Ovary (tissue), 10 donors: ENCODE measurements at regions of chr4 and their contacts with region 1.

Region 1: DNA sequence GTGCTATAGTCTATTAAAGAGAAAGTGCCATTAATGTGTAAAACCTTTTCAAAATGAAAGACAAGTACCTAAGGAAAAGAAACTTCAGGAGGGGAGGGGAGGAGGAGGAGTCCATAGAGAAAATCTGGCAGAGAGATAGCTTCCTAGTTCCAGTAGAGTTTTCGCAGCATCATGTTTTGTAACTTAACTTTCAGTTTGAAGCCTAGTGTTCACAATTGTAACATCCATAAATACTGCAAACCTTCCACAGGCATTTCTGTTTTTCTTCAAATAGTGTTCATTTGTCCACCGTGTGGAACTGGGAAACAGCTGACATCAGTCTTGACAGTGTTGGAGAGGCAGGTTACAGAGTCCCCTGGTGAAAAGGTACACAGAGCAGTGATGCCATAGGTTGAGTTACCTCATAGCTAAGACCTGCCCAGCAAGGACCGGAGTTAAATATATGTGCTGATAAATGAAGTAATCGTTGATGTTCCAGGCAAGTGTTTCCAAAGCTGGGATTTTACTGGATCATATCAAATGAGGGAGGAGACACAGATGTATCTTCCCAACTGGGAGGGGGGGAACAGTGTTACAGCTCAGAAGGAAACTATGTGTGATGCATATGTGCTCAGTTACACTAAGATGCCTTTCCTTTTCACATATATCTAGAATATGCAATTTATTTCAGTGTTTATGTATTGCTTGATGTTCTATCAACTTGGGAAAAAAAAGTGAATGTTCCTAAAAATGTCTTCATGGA is 369.5 kb upstream of the FAM241A start:
- DNase-seq: no peak
- H3K4me3 ChIP-seq: no peak overlapping the region
- H3K27ac ChIP-seq: no peak overlapping the region
- H3K4me1 ChIP-seq: no peaks in the 10 kb centered on the region
- H3K27me3 ChIP-seq: no peaks in the 10 kb centered on the region
- CTCF ChIP-seq: no peak
- EP300 ChIP-seq: no peak
- POLR2A ChIP-seq: no peak

Region 2: GRCh38 chr4:111761531-111761930 is 14.2 kb before region 1 on chr4:
- intact Hi-C with region 1: loop called in 1 of 4 experiments (anchors 2 kb)
- DNase-seq: no peak
- H3K4me3 ChIP-seq: no peak overlapping the region
- H3K27ac ChIP-seq: no peak overlapping the region
- H3K4me1 ChIP-seq: no peaks in the 10 kb centered on the region
- H3K27me3 ChIP-seq: no peaks in the 10 kb centered on the region
- CTCF ChIP-seq: no peak
- EP300 ChIP-seq: no peak
- POLR2A ChIP-seq: no peak

Region 3: GRCh38 chr4:111905511-111905910 is 129.8 kb after region 1 on chr4:
- intact Hi-C with region 1: no loop called
- DNase-seq: no peak
- H3K4me3 ChIP-seq: no peak overlapping the region
- H3K27ac ChIP-seq: no peak overlapping the region
- H3K4me1 ChIP-seq: no peaks in the 10 kb centered on the region
- H3K27me3 ChIP-seq: no peaks in the 10 kb centered on the region
- CTCF ChIP-seq: no peak
- EP300 ChIP-seq: no peak
- POLR2A ChIP-seq: no peak